ENCODE measurements at regions of chr20 and their contacts with region 1.

Region 1: DNA sequence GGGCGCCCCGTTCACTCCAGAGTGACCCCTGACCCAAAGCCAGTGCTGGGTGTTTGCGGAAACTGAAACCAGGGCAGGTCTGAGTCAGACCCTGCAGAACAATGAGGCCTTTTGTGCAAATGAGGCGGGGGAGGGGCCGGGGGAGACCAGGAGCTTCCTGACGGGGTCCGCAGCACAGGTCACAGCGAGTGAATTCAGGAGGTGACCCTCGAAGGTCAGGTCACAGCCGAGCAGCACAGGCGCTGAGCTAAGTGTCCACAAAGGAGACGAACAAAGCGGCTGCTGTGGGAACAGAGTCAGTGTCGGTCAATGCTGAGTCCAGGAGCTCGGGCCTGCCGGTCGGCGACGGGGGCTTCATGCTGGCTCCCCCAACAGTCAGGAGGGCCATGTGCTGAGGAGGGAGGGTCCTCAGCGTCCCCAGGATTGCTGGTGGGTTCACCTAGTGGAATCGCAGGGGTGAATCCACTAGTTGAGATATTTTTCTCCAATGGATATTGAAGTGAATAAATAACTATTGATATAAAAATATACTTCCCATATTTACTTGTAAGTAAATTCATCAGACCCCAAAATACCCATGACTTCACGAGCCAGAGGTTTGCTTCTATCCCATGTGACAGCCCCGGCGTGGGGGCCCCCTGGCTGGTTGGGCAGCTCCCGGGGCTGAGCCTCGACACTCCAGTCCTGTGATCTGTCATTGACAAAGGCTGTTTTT is 188.4 kb upstream of the SULF2 start:
- DNase-seq: peak; percentile 86 to 95
- H3K4me3 ChIP-seq: peak overlapping the region; percentile 68
- H3K27ac ChIP-seq: peak overlapping the region; percentile 100
- H3K4me1 ChIP-seq: peaks cover 60% of the 10 kb centered on the region
- H3K27me3 ChIP-seq: no peaks in the 10 kb centered on the region
- CTCF ChIP-seq: no peak

Region 2: DNA sequence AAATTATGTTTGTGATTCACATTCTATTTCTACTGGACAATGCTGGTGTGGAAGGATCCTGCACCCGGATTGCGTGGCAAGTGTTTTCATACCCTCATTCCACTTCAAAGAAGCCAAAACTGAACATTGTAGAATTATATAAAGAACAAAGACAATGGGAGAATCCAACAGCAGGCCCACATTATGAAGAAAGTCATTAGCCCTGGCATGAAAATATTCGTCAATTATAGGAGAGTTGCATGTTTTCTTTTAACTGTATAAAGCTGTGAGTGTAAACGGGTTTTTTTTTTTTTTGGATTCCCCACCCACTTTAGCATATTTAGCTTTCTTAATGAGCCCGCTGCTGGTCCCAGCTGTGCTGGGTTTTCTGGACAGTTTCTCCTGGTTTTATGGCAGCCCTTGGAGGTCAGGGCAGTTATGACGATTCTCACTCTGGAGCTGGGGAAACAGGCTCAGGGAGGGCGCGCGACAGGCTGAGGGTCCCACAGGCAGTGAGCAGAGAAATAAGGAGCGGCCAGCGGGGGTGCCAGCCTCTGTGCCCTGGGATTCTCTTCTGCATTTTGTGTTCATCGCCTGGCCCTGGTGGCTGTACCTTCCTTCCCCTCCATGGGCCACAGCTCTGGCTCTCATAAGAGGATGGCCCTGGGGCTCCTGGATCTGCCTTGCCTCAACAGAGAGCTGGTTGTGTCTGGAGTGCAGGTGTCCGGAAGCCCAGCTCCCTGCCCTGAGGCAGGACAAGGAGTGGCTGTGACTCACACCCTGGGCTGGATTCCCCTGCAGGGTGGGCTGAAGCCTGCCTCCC is 164.4 kb before region 1 on chr20:
- CTCF ChIA-PET with region 1: no interaction called
- POLR2A ChIA-PET with region 1: interaction called, 5 read pairs
- intact Hi-C with region 1: loop called (anchors 2 kb)
- DNase-seq: peak; percentile 98 to 99
- H3K4me3 ChIP-seq: peak overlapping the region; percentile 25; the same call in 1 of the 2 replicates
- H3K27ac ChIP-seq: peak overlapping the region; percentile 95
- H3K4me1 ChIP-seq: peaks cover 67% of the 10 kb centered on the region
- H3K27me3 ChIP-seq: no peaks in the 10 kb centered on the region
- CTCF ChIP-seq: no peak

Region 3: DNA sequence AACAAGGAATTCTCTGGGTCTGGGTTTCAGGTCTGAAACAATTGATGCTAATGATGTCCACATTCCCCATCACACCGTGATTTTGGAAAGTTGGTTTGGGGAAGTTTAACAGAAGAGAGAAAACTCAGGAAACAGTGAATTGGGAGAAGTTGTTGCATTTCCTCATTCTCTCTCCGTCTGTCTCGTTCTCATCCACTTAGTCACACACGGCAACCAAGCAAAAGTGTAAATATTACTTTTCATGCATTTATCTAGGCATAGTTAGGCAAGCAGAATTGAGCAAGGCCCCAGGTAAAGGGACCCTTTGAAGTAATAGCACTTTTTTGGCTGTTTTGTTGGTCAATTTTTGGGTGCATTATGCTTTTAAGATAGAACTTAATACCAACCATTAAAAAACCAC is 51.4 kb before region 1 on chr20:
- CTCF ChIA-PET with region 1: no interaction called
- POLR2A ChIA-PET with region 1: interaction called, 9 read pairs
- intact Hi-C with region 1: loop called (anchors 2 kb)
- DNase-seq: peak; percentile 49 to 92
- H3K4me3 ChIP-seq: peak overlapping the region; percentile 21; the same call in 1 of the 2 replicates
- H3K27ac ChIP-seq: peak overlapping the region; percentile 88
- H3K4me1 ChIP-seq: peaks cover 56% of the 10 kb centered on the region
- H3K27me3 ChIP-seq: no peaks in the 10 kb centered on the region
- CTCF ChIP-seq: no peak

Region 4: GRCh38 chr20:48025031-48025515 is 51.4 kb after region 1 on chr20:
- CTCF ChIA-PET with region 1: interaction called, 3 read pairs
- POLR2A ChIA-PET with region 1: no interaction called
- intact Hi-C with region 1: loop called (anchors 2 kb)
- DNase-seq: peak; percentile 85 to 88
- H3K4me3 ChIP-seq: peak overlapping the region; percentile 72
- H3K27ac ChIP-seq: peak overlapping the region; percentile 94
- H3K4me1 ChIP-seq: peaks cover 35% of the 10 kb centered on the region
- H3K27me3 ChIP-seq: no peaks in the 10 kb centered on the region
- CTCF ChIP-seq: no peak

Region 5: GRCh38 chr20:48139262-48139987 is 165.7 kb after region 1 on chr20:
- CTCF ChIA-PET with region 1: no interaction called
- POLR2A ChIA-PET with region 1: no interaction called
- intact Hi-C with region 1: loop called (anchors 1 kb)
- DNase-seq: peak; percentile 79 to 88
- H3K4me3 ChIP-seq: no peak overlapping the region
- H3K27ac ChIP-seq: peak overlapping the region; percentile 45
- H3K4me1 ChIP-seq: peaks cover 23% of the 10 kb centered on the region
- H3K27me3 ChIP-seq: no peaks in the 10 kb centered on the region
- CTCF ChIP-seq: no peak

Region 6: DNA sequence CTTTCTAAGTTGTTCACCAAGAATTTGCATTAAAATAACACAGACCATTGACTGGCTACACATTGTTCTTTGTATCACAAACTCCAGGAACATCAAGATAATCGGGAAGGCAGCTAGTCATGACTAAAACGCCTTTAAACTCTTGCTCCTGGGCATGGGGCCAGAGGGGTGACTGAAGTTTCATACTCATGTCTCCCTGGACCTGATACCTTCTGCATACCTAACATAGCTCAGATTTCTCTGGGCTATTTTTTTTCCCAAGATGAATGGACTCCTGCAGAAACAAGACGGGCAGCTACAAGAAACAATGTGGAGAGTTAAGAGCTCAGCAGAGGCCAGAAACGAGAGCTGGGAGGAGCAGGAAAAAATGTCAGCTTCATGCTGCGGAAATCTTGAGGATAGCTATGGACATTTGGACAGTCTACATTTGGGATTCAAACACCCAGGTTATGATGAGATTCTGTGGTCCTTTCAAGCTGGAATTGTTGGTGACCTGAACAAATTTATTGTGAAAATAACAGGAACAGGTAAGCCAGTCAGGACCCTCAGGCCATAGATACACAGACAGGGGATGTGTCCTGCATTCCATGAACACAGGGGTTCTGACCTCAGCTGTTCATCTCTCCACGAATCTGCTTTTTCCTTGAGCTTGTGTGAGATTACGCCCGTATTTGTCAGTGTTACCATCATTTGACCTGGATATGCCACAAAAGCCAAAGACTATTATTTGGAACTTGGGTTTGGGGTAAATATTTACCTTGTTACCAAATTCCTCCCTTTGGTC is 564.9 kb after region 1 on chr20:
- CTCF ChIA-PET with region 1: no interaction called
- POLR2A ChIA-PET with region 1: no interaction called
- intact Hi-C with region 1: loop called (anchors 5 kb)
- DNase-seq: peak; percentile 94 to 99
- H3K4me3 ChIP-seq: peak overlapping the region; percentile 7; the same call in 1 of the 2 replicates
- H3K27ac ChIP-seq: peak overlapping the region; percentile 84
- H3K4me1 ChIP-seq: peaks cover 47% of the 10 kb centered on the region
- H3K27me3 ChIP-seq: no peaks in the 10 kb centered on the region
- CTCF ChIP-seq: no peak